ENCODE measurements at regions of chr14 and their contacts with region 1.

Region 1: DNA sequence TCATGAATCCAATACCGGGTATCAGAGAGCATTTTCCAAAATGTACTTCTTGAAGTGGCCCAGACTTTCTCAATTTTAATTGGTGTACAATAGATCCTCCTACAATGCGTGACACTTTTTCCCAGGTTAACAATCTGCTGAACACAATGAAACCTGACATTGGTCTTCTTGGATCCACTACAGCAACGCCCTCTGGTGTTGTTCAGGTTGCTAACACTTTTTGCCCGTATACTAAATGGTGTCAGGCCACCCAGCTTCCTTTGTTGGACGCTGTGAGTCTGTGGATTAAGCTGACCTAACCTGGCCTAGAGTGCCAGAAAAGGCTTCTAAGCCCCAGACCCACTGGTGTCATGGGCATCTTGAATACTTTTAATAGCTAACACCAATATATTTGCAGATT is 89.2 kb downstream of the KCNK10 start:
- DNase-seq: peak in 1 of 2 experiments; percentile 3
- H3K4me3 ChIP-seq: no peak overlapping the region
- H3K27ac ChIP-seq: no peak overlapping the region
- H3K4me1 ChIP-seq: peaks cover 0 to 6% (median 0%) of the 10 kb centered on the region in 4 experiments; a peak in 1 of 7 replicates
- H3K27me3 ChIP-seq: no peaks in the 10 kb centered on the region
- CTCF ChIP-seq: peak; percentile 34 to 81 (median 68)
- EP300 ChIP-seq: no peak
- POLR2A ChIP-seq: no peak
- RAD21 ChIP-seq: peak; percentile 70 to 77

Region 2: DNA sequence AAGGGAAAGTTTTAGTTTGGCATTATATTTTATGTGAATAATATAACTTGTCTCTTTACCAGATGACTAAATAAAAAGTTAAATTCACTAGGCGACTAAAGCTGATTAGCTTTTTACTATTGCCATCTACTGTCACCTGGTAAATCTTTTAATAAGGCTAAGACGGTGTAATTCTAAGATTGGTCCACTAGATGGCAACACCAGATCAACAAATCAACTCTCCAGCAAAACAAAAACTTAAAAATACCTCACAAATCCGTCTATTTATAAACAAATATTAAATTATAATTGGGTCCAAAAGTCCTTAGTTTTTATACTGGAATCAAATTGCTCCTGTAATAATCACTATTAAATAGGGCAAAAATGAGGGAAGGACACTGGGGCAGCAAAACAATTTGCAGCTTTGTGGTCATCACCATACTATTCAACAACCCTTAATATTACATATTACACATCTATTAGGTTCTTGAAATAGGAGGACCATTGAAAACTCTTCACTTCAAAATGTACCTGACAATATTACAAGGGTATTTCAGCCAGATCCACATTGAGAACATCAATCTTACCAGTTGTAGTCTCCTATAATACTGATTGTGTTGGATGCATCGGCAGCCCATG is 288.8 kb before region 1 on chr14:
- CTCF ChIA-PET with region 1: interaction called, 13 read pairs
- POLR2A ChIA-PET with region 1: no interaction called
- DNase-seq: no peak
- H3K4me3 ChIP-seq: no peak overlapping the region
- H3K27ac ChIP-seq: no peak overlapping the region
- H3K4me1 ChIP-seq: no peaks in the 10 kb centered on the region
- H3K27me3 ChIP-seq: no peaks in the 10 kb centered on the region
- CTCF ChIP-seq: peak in 2 of 3 experiments; percentile 37 to 47; a peak in 2 of 4 replicates
- EP300 ChIP-seq: no peak
- POLR2A ChIP-seq: no peak
- RAD21 ChIP-seq: peak; percentile 57 to 67

Region 3: GRCh38 chr14:88013750-88014349 is 220.1 kb before region 1 on chr14:
- CTCF ChIA-PET with region 1: interaction called, 30 read pairs
- POLR2A ChIA-PET with region 1: no interaction called
- DNase-seq: peak in 1 of 2 experiments; percentile 69
- H3K4me3 ChIP-seq: no peak overlapping the region
- H3K27ac ChIP-seq: no peak overlapping the region
- H3K4me1 ChIP-seq: peaks cover 0 to 3% (median 0%) of the 10 kb centered on the region in 4 experiments; a peak in 1 of 7 replicates
- H3K27me3 ChIP-seq: no peaks in the 10 kb centered on the region
- CTCF ChIP-seq: peak; percentile 59 to 87 (median 85)
- EP300 ChIP-seq: no peak
- POLR2A ChIP-seq: no peak
- RAD21 ChIP-seq: peak; percentile 93 to 94

Region 4: DNA sequence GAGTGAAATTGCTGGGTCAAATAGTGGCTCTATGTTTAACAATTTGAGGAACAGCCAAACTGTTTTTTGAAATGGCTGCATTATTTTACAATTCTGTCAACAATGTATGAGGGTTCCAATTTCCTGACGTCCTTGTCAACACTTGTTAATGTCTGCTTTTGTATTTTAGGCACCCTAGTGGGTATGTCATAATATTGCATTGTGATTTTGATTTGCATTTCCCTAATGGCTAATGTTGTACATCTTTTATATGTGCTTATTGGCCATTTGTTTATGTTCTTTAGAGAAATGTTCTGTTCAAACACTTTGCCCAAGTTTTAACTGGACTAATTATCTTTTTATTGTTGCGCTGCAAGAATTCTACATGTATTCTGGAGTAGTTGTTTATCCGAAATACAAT is 135.8 kb before region 1 on chr14:
- CTCF ChIA-PET with region 1: no interaction called
- POLR2A ChIA-PET with region 1: no interaction called
- DNase-seq: no peak
- H3K4me3 ChIP-seq: no peak overlapping the region
- H3K27ac ChIP-seq: no peak overlapping the region
- H3K4me1 ChIP-seq: 0 out of 7 replicates have a peak, but pooled peaks cover 0 to 1% (median 0%) of the 10 kb centered on the region in 4 experiments
- H3K27me3 ChIP-seq: no peaks in the 10 kb centered on the region
- CTCF ChIP-seq: no peak
- EP300 ChIP-seq: no peak
- POLR2A ChIP-seq: no peak
- RAD21 ChIP-seq: no peak

Region 5: DNA sequence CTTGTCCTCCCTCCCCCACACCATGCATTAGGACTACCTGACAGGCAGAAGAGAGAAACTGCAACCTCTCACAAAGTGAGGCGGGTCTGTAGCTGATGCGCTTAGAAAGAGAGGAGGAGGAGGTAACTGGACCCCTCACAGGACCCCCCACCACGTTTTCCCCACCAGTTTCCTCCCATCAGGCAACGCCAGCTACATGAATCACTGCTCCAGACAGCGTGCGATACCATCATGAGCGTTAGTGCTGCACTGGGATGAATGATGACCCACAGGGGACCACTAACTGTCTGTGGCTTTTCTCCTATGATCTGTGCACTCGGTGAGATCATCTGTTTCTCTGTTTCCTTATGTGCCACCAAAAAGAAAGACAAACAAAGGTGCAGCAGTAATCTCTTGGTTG is 11.4 kb after region 1 on chr14:
- CTCF ChIA-PET with region 1: interaction called, 96 read pairs
- POLR2A ChIA-PET with region 1: no interaction called
- DNase-seq: no peak
- H3K4me3 ChIP-seq: no peak overlapping the region
- H3K27ac ChIP-seq: no peak overlapping the region
- H3K4me1 ChIP-seq: no peaks in the 10 kb centered on the region; a peak in 1 of 7 replicates
- H3K27me3 ChIP-seq: no peaks in the 10 kb centered on the region
- CTCF ChIP-seq: no peak
- EP300 ChIP-seq: no peak
- POLR2A ChIP-seq: no peak
- RAD21 ChIP-seq: no peak

Region 6: GRCh38 chr14:88256997-88257950 is 23.4 kb after region 1 on chr14:
- CTCF ChIA-PET with region 1: interaction called, 96 read pairs
- POLR2A ChIA-PET with region 1: no interaction called
- DNase-seq: no peak
- H3K4me3 ChIP-seq: no peak overlapping the region
- H3K27ac ChIP-seq: no peak overlapping the region
- H3K4me1 ChIP-seq: no peaks in the 10 kb centered on the region
- H3K27me3 ChIP-seq: no peaks in the 10 kb centered on the region
- CTCF ChIP-seq: no peak
- EP300 ChIP-seq: no peak
- POLR2A ChIP-seq: no peak
- RAD21 ChIP-seq: no peak

Measured in H1 (cell line).